ENCODE measurements at regions of chr4 and their contacts with region 1.

Region 1: GRCh38 chr4:88251924-88252323 is 32.4 kb downstream of the PPM1K start:
- DNase-seq: no peak

Region 2: GRCh38 chr4:87916626-87917025 is 335.3 kb before region 1 on chr4:
- in situ Hi-C with region 1: no loop called
- DNase-seq: no peak

Region 3: GRCh38 chr4:88523325-88524129 is 271.6 kb after region 1 on chr4 and contains the start of gene PYURF:
- in situ Hi-C with region 1: loop called (anchors 25 kb)
- DNase-seq: peak; percentile 93
- total RNA-seq, gene PYURF: 177 and 198 TPM in 2 replicates

Measured in G401 (cell line).